Mucosa of descending colon (tissue), 3 donors: ENCODE measurements at regions of chr1 and their contacts with region 1.

Region 1: DNA sequence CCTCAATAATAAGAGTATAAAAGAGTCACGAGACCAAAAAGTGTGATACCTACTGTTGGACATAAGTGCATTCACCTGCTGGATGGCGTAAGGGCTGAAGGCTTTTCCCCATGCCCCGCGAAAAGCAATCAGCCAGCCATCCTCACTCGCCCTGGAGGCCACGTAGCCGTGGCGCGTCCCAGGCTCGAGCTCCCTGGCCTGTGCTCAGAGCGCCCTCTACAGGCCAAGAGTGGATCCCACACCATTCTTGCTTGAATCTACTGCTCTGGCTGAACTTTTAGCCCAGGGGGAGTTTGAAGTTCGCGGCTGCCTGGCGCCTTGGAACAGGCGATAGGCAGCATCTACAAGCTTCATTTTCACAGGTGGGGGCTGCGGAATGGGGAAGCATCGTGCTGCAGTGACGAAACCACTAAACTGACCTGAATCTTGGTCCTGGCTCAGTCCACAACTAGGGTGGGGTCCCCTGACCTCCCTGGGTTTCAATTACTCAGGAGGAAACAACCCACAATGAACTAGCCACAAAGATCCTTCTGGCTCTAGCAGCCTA is 70.3 kb upstream of the SERBP1 start:
- DNase-seq: peak; percentile 83 to 90 (median 88)
- ATAC-seq: peak; percentile 100
- H3K4me3 ChIP-seq: no peak overlapping the region
- H3K4me1 ChIP-seq: no peaks in the 10 kb centered on the region
- CTCF ChIP-seq: peak; percentile 96

Region 2: DNA sequence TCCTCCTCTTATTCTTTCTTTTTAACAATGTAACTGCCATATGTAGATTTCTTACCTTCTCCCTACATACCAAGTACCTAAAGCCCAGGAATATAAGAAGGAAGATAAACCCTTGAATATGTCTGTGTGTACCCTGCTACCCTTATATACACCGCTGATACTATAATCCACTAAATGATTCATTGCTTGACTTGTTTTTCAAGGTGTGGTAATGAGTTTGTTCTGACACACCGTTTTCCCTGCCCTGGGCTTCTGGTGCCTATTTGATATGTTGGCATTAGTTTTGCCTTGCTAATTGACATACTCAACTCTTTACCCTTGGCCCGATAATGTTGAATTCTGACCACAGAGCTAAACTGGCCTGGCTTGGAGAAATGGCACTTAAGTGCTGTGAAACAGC is 269.9 kb before region 1 on chr1:
- intact Hi-C with region 1: loop called (anchors 5 to 10 kb)
- DNase-seq: no peak
- ATAC-seq: peak; percentile 61
- H3K4me3 ChIP-seq: no peak overlapping the region
- H3K4me1 ChIP-seq: no peaks in the 10 kb centered on the region
- CTCF ChIP-seq: no peak

Region 3: GRCh38 chr1:67332653-67333529 is 167.6 kb before region 1 on chr1:
- intact Hi-C with region 1: no loop called
- DNase-seq: no peak
- ATAC-seq: peak; percentile 31
- H3K4me3 ChIP-seq: no peak overlapping the region
- H3K4me1 ChIP-seq: no peaks in the 10 kb centered on the region
- CTCF ChIP-seq: no peak

Region 4: DNA sequence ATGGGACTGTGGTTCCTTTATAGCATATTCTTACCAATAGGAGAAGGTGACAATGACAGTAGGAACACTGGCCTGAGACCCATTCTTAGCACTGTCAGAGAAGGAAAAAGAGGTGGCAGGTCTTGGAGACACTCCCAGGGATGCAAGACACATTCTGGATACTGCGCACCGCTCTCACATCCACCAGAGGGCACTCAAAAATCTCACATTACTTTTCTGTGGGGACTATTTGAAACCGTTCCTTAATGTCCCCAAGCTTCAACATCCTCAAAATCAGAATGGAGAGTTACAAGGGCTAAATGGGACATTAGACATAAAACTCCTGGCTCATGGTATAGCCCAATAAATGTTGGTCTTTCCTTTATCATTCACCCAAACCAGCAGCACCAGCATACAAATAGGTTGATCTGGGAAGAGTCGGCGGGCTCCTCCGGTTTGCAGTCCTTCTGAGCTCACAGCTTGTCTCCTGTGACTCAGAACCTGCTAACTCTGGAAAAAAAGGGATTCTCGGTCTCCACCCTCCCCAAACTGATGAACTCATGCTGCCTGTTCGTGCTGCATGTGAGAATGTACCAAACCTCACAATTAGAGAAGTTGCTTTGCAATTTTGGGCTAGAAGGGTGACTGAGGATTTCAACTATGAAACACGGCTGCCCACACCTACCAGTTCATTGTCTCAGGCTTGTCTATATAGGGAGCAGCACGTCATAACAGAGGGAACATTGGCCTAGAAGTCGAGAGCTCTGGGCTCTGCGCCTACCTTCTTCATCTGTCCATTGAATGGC is 152.6 kb before region 1 on chr1:
- intact Hi-C with region 1: loop called in 1 of 2 experiments (anchors 5 kb)
- DNase-seq: peak in 2 of 3 donors; percentile 31 to 59
- ATAC-seq: peak; percentile 64
- H3K4me3 ChIP-seq: no peak overlapping the region
- H3K4me1 ChIP-seq: no peaks in the 10 kb centered on the region
- CTCF ChIP-seq: peak; percentile 29